A673 (cell line): ENCODE measurements at regions of chr6 and their contacts with region 1.

Region 1: GRCh38 chr6:44074439-44075136 is 52.7 kb downstream of the MRPL14 start:
- DNase-seq: peak; percentile 94
- H3K4me3 ChIP-seq: peak overlapping the region; percentile 39
- H3K27ac ChIP-seq: peak overlapping the region; percentile 78
- H3K4me1 ChIP-seq: peaks cover 44% of the 10 kb centered on the region
- H3K27me3 ChIP-seq: no peaks in the 10 kb centered on the region
- CTCF ChIP-seq: peak; percentile 99

Region 2: GRCh38 chr6:43608310-43608763 is 466.3 kb before region 1 on chr6:
- CTCF ChIA-PET with region 1: interaction called, 8 read pairs
- POLR2A ChIA-PET with region 1: no interaction called
- intact Hi-C with region 1: loop called (anchors 1 kb)
- DNase-seq: peak; percentile 88
- H3K4me3 ChIP-seq: no peak overlapping the region
- H3K27ac ChIP-seq: no peak overlapping the region
- H3K4me1 ChIP-seq: peaks cover 4% of the 10 kb centered on the region
- H3K27me3 ChIP-seq: no peaks in the 10 kb centered on the region
- CTCF ChIP-seq: peak; percentile 90

Region 3: DNA sequence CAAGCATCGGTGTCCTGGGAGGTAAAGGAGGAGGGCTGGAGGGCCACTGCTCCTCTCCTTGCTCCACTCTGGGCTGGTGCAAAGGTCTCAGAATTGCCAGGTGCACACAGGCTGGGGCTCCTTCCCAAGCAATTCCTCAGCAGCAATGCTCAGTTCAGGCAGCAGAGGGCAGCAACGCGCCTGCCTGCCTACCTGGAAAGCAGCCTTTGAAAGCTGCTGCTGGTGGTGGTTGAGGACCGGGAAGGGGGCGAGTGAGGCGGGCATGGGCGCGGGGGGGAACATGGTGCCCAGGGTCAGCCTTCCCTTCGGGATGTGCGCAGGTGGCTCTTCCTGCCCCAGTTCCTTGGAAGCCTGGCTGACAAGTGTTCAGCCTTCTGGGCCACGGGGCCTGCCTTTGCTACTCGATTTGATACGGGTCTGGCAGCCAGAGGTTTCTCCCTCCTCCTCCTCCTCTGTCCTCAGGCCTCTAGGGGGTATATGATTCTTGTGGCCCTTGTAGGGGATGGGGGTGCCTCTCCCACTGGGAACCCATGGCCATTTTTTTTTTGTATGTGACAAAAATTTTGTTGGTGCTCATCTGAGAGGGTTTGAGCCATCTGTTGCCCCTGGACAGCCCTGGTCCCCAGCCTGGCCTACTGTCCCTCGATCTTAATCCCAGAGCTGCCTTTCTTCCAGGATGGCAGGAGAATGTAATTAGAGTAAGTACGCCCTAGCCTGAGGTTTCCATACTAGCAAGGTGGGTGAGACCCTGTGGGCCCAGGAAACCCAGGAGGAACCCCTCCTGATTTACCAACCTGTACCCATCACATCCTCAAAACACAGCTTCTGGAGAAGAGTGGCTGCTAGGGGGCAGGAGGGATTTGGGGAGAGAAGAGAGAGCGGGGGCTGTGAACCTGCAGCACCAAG is 407.1 kb before region 1 on chr6:
- CTCF ChIA-PET with region 1: interaction called, 29 read pairs
- POLR2A ChIA-PET with region 1: no interaction called
- intact Hi-C with region 1: loop called (anchors 1 kb)
- DNase-seq: peak; percentile 81
- H3K4me3 ChIP-seq: peak overlapping the region; percentile 21
- H3K27ac ChIP-seq: no peak overlapping the region
- H3K4me1 ChIP-seq: peaks cover 14% of the 10 kb centered on the region
- H3K27me3 ChIP-seq: no peaks in the 10 kb centered on the region
- CTCF ChIP-seq: peak; percentile 96

Region 4: GRCh38 chr6:43723737-43724295 is 350.8 kb before region 1 on chr6:
- CTCF ChIA-PET with region 1: interaction called, 8 read pairs
- POLR2A ChIA-PET with region 1: no interaction called
- intact Hi-C with region 1: loop called (anchors 1 kb)
- DNase-seq: peak; percentile 73
- H3K4me3 ChIP-seq: no peak overlapping the region
- H3K27ac ChIP-seq: peak overlapping the region; percentile 36
- H3K4me1 ChIP-seq: peaks cover 21% of the 10 kb centered on the region
- H3K27me3 ChIP-seq: no peaks in the 10 kb centered on the region
- CTCF ChIP-seq: peak; percentile 78

Region 5: DNA sequence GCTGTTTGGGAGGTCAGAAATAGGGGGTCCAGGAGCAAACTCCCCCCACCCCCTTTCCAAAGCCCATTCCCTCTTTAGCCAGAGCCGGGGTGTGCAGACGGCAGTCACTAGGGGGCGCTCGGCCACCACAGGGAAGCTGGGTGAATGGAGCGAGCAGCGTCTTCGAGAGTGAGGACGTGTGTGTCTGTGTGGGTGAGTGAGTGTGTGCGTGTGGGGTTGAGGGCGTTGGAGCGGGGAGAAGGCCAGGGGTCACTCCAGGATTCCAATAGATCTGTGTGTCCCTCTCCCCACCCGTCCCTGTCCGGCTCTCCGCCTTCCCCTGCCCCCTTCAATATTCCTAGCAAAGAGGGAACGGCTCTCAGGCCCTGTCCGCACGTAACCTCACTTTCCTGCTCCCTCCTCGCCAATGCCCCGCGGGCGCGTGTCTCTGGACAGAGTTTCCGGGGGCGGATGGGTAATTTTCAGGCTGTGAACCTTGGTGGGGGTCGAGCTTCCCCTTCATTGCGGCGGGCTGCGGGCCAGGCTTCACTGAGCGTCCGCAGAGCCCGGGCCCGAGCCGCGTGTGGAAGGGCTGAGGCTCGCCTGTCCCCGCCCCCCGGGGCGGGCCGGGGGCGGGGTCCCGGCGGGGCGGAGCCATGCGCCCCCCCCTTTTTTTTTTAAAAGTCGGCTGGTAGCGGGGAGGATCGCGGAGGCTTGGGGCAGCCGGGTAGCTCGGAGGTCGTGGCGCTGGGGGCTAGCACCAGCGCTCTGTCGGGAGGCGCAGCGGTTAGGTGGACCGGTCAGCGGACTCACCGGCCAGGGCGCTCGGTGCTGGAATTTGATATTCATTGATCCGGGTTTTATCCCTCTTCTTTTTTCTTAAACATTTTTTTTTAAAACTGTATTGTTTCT is 304.8 kb before region 1 on chr6 and contains the start of gene VEGFA:
- CTCF ChIA-PET with region 1: interaction called, 49 read pairs
- POLR2A ChIA-PET with region 1: no interaction called
- intact Hi-C with region 1: loop called (anchors 1 kb)
- DNase-seq: peak; percentile 92
- H3K4me3 ChIP-seq: peak within 1 kb of the TSS; percentile 76
- H3K27ac ChIP-seq: peak within 1 kb of the TSS; percentile 98
- H3K4me1 ChIP-seq: peaks cover 3% of the 10 kb centered on the region
- H3K27me3 ChIP-seq: no peaks in the 10 kb centered on the region
- CTCF ChIP-seq: peak; percentile 99
- total RNA-seq, gene VEGFA: 116 and 144 TPM in 2 replicates

Region 6: DNA sequence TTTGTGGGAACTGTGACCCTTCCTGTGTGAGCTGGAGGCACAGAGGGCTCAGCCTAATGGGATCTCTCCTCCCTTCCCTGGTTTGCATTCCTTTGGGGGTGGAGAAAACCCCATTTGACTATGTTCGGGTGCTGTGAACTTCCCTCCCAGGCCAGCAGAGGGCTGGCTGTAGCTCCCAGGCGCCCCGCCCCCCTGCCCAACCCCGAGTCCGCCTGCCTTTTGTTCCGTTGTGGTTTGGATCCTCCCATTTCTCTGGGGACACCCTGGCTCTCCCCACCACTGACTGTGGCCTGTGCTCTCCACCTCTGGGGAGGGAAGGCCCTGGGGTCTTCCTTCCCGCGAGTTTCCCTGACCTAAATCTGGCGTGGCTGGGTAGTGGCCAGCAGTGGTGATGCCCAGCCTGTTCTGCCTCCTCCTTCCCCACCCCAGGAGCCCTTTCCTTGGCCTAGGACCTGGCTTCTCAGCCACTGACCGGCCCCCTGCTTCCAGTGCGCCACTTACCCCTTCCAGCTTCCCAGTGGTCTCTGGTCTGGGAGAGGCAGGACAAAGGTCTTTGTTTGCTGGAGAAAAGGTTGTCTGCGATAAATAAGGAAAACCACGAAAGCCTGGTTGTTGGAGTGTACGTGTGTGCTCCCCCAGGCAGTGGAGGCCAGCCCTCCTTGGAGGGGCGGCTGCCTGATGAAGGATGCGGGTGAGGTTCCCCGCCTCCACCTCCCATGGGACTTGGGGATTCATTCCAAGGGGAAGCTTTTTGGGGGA is 299.6 kb before region 1 on chr6:
- CTCF ChIA-PET with region 1: interaction called, 49 read pairs
- POLR2A ChIA-PET with region 1: no interaction called
- intact Hi-C with region 1: no loop called
- DNase-seq: peak; percentile 85
- H3K4me3 ChIP-seq: peak overlapping the region; percentile 76
- H3K27ac ChIP-seq: peak overlapping the region; percentile 98
- H3K4me1 ChIP-seq: peaks cover 15% of the 10 kb centered on the region
- H3K27me3 ChIP-seq: no peaks in the 10 kb centered on the region
- CTCF ChIP-seq: peak; percentile 86

Region 7: DNA sequence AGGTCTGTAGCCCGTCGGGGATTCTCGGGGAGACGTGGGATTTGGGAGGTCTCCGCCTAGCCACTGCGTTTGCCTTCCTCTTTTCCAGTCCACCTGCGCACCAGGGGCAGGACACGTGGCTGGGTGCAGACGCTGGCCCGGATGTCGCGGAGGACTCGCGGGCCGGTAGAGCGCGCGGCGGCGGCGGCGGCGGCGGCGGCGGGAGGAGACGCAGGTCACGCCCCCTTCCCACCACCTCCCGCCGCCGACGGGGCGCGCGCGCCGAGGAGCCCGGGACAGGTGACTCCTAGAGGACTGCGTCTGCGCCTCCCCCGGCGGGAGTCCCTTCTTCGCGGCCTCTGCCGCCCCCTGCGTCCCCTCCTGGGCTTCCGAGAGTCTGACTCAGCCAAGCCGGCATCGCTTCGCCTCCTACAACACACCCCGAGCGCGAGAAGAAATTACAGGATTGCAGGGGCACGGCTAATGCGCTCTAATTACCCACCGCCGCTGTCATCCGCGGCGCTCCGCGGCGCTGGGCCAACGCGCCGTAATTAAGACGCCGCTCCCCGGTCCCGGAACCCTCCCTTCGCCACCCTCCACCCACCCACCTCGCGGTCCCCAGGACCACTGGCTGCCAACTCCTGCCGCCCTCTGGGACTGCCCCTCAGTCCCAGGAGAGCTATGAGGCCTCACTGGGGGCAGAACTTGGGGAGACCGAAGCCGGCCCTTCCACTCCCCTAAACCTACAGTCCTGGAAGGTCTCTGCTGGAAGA is 71.8 kb before region 1 on chr6:
- CTCF ChIA-PET with region 1: interaction called, 5 read pairs
- POLR2A ChIA-PET with region 1: no interaction called
- intact Hi-C with region 1: loop called (anchors 1 kb)
- DNase-seq: peak; percentile 88
- H3K4me3 ChIP-seq: peak overlapping the region; percentile 39
- H3K27ac ChIP-seq: peak overlapping the region; percentile 92
- H3K4me1 ChIP-seq: peaks cover 83% of the 10 kb centered on the region
- H3K27me3 ChIP-seq: no peaks in the 10 kb centered on the region
- CTCF ChIP-seq: no peak; the same call in 1 of the 2 replicates

Region 8: DNA sequence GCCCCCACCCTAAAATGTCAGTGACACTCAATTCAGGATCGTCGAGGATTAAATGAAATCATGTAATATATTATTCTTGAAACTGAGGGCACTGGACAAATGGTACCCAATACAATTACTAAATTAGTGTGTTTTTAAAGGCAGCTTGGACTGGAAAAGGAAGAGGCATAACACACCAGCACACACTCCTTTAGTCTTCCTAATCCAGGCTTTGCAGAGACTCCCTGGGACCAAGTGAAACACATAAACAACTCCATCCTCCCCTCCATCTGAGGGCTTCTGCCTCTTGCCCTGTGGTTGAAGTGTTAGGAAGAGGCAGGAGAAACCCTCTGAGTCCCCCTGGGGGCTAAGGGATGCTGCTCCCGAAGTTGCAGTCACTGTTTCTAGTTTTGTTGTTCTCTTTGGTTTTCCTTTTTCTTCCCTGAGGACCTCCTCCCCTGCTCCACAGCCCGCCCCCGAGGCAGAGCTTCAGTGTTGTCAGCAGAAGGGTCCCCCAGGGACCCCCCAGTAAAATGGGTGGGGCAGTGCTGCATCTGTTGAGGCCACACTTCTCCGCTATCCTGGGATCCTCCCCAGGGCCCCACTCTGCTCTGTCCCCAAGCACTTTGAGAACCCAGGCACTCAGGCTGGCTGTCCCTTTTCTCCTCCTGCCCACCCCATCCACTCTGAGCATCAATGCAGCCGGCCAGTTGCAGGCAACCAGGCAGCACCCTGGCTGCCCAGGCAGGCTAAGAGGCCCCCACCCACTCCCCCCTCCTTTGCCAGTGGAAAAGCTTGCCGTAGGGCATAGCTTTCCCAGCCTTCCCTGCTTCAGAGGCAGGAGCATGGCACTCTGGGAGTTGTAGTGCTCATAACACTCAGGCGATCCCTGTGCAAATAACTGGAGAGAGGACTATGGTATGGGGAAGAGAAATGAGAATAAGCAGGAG is 58.7 kb after region 1 on chr6:
- CTCF ChIA-PET with region 1: no interaction called
- POLR2A ChIA-PET with region 1: no interaction called
- intact Hi-C with region 1: no loop called
- DNase-seq: peak; percentile 80
- H3K4me3 ChIP-seq: peak overlapping the region; percentile 9
- H3K27ac ChIP-seq: peak overlapping the region; percentile 75
- H3K4me1 ChIP-seq: peaks cover 40% of the 10 kb centered on the region
- H3K27me3 ChIP-seq: no peaks in the 10 kb centered on the region
- CTCF ChIP-seq: no peak

Region 9: DNA sequence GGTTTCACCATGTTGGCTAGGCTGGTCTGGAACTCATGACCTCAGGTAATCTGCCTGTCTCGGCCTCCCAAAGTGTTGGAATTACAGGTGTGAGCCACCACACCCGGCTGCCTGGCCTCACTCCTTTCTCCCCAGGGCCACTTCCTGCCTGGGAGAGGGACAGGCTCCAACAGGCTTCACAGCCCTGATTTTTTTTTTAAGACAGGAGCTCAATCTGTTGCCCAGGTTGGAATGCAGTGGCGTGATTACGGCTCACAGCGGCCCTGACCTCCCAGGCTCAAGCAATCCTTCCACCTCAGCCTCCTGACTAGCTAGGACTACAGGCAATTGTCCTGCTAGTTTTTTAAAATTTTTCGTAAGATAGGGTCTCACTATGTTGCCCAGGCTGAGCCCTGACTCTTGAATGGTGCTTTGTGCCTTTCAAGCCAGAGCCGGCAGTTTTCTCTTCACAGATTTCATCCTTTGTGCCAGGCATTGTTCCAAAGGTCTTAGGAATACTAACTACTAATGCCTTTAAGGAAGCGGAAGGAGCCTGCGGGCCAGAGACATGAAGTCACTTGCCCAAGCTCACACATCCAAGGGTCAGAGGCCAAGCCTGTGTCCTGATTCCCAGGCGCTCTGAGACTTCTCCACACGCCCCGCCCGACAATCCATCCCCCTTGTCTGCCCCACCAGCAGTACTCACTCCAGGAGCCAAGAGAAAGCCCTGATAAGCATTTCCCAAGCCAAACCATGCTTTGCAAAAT is 103.3 kb after region 1 on chr6:
- CTCF ChIA-PET with region 1: no interaction called
- POLR2A ChIA-PET with region 1: no interaction called
- intact Hi-C with region 1: no loop called
- DNase-seq: no peak
- H3K4me3 ChIP-seq: no peak overlapping the region
- H3K27ac ChIP-seq: no peak overlapping the region
- H3K4me1 ChIP-seq: no peaks in the 10 kb centered on the region
- H3K27me3 ChIP-seq: no peaks in the 10 kb centered on the region
- CTCF ChIP-seq: no peak

Region 10: GRCh38 chr6:44221291-44221960 is 146.8 kb after region 1 on chr6:
- CTCF ChIA-PET with region 1: no interaction called
- POLR2A ChIA-PET with region 1: no interaction called
- intact Hi-C with region 1: no loop called
- DNase-seq: peak; percentile 84
- H3K4me3 ChIP-seq: no peak overlapping the region
- H3K27ac ChIP-seq: peak overlapping the region; percentile 38
- H3K4me1 ChIP-seq: peaks cover 63% of the 10 kb centered on the region
- H3K27me3 ChIP-seq: no peaks in the 10 kb centered on the region
- CTCF ChIP-seq: peak; percentile 73